ENCODE measurements at regions of chr12 and their contacts with region 1.

Region 1: DNA sequence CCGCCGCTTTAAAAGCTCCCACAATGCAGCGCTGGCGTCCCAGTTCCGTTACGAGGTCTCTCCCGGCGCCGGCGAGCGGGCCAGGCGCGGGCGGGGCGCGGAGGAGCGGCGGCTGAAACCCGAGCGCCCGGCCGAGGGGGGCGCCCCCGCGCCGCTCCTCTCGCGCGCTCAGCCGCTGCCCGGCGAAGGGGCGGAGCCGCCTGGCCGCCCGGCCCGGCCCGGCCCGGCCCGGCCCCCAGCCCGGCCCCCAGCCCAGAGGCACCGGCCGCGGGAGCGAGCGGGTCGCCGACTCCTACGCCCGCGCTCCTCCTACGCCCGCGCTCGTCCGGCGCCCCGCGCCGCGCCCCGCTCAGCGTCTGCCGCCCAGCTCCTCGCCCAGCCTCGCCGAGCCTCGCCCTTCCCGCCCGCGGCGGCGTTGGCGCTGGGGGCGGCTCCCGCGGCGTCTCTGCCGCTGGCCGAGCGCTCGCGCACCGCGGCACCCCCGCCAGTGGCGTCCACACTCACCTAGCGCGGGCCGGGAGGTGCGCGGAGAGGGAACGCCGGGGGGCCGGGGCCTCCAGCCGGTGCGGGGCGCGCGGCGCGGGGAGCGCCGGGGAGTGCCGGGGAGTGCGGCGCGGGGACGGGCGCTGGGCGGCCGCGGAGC is at the start of gene RASSF8:
- DNase-seq: peak; percentile 90
- ATAC-seq: peak; percentile 79
- H3K4me3 ChIP-seq: peak within 1 kb of the TSS; percentile 89
- H3K27ac ChIP-seq: peak within 1 kb of the TSS; percentile 96
- H3K4me1 ChIP-seq: peaks cover 26% of the 10 kb centered on the region
- H3K27me3 ChIP-seq: no peaks in the 10 kb centered on the region
- CTCF ChIP-seq: no peak
- total RNA-seq, gene RASSF8: 51.2 and 87.8 TPM in 2 replicates

Region 2: GRCh38 chr12:25436203-25437030 is 522.1 kb before region 1 on chr12:
- CTCF ChIA-PET with region 1: interaction called, 4 read pairs
- POLR2A ChIA-PET with region 1: interaction called, 15 read pairs
- intact Hi-C with region 1: loop called (anchors 2 kb)
- DNase-seq: peak; percentile 84
- ATAC-seq: peak; percentile 69
- H3K4me3 ChIP-seq: peak overlapping the region; percentile 82
- H3K27ac ChIP-seq: no peak overlapping the region
- H3K4me1 ChIP-seq: peaks cover 20% of the 10 kb centered on the region
- H3K27me3 ChIP-seq: no peaks in the 10 kb centered on the region
- CTCF ChIP-seq: peak; percentile 93

Region 3: DNA sequence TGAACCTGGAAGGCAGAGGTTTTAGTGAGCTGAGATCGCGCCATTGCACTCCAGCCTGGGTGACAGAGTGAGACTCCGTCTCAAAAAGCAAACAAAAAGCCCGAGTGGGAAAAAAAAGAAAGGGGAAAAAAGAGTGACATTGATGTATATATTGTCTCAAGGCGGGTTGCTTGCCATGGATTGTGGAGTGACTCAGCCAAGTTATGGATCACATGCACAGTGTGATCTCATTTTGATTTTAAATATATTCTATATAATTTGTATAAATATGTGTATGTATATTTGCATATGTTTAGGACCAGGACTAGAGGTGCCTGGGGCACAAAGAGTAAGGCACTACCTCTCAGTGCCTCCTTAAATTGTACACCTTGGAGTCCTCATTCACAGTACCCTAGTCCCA is 116.3 kb before region 1 on chr12:
- CTCF ChIA-PET with region 1: no interaction called
- POLR2A ChIA-PET with region 1: no interaction called
- intact Hi-C with region 1: no loop called
- DNase-seq: peak; percentile 54
- ATAC-seq: peak; percentile 9; the same call in 1 of the 2 replicates
- H3K4me3 ChIP-seq: no peak overlapping the region
- H3K27ac ChIP-seq: no peak overlapping the region
- H3K4me1 ChIP-seq: peaks cover 22% of the 10 kb centered on the region
- H3K27me3 ChIP-seq: no peaks in the 10 kb centered on the region
- CTCF ChIP-seq: no peak

Region 4: DNA sequence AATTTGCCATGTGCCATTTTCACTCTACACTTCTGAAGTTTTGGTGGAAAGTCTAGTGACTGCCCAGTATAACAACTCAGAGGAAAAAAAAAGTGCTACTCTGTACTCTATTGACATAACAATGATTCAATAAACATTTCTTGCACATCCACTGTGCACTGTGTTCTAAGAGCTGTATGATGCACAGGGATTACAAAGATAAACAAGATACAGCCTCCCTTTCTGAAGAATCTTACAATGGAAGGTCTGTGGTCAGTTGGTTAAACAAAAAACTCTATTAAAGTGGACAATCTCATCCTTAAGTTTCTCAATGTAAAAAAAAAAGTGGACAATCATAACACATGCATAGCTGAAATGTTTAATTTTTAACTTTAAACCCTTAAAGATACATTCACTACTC is 105.8 kb before region 1 on chr12:
- CTCF ChIA-PET with region 1: interaction called, 3 read pairs
- POLR2A ChIA-PET with region 1: interaction called, 3 read pairs
- intact Hi-C with region 1: loop called (anchors 5 kb)
- DNase-seq: peak; percentile 95
- ATAC-seq: peak; percentile 100
- H3K4me3 ChIP-seq: no peak overlapping the region
- H3K27ac ChIP-seq: peak overlapping the region; percentile 66
- H3K4me1 ChIP-seq: peaks cover 26% of the 10 kb centered on the region
- H3K27me3 ChIP-seq: no peaks in the 10 kb centered on the region
- CTCF ChIP-seq: no peak

Region 5: DNA sequence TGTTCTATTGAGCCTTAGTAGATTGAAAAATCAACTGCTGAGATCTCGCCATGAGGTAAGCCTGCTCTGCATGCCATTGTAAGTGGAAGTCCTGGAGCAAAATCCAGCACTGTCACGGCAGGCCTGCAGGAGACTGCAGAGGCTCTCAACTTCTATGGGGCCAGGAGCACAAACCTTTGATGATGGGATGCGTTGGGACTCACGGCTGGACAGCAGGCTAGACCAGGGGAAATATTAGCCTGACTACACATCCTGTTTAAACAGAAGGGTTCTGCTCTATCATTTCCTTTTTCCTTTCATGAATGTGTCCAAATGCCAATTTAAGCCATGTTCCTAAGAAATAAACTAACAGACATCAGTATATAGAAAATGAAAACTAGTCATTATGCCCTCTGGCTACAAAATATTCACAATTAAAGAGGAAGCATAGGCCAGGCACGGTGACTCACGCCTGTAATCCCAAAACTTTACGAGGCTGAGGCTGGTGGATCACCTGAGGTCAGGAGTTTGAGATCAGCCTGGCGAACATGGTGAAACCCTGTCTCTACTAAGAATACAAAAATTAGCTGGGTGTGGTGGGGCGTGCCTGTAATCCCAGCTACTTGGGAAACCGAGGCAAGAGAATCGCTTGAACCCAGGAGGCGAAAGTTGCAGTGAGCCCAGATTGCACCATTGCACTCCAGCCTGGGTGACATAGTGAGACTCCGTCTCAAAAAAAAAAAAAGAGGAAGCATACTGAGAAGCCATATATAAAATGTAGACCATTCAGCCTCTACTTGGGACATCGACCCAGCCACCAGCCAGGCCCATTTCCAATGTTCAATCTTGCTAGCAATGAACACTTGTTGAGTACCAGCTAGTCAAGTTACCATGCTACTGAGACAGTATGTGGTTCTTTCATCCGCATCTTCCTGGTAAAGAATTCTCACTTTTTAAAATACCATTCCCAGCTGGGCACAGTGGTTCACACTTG is 33.8 kb before region 1 on chr12:
- CTCF ChIA-PET with region 1: no interaction called
- POLR2A ChIA-PET with region 1: interaction called, 3 read pairs
- intact Hi-C with region 1: loop called (anchors 1 kb)
- DNase-seq: peak; percentile 100
- ATAC-seq: peak; percentile 83
- H3K4me3 ChIP-seq: peak overlapping the region; percentile 18; the same call in 1 of the 2 replicates
- H3K27ac ChIP-seq: peak overlapping the region; percentile 92
- H3K4me1 ChIP-seq: peaks cover 72% of the 10 kb centered on the region
- H3K27me3 ChIP-seq: no peaks in the 10 kb centered on the region
- CTCF ChIP-seq: 0 out of 2 replicates have a peak, but pooled peaks have one; percentile 27

Region 6: GRCh38 chr12:25985296-25986175 is 27.0 kb after region 1 on chr12:
- CTCF ChIA-PET with region 1: no interaction called
- POLR2A ChIA-PET with region 1: no interaction called
- intact Hi-C with region 1: no loop called
- DNase-seq: no peak
- ATAC-seq: no peak
- H3K4me3 ChIP-seq: no peak overlapping the region
- H3K27ac ChIP-seq: no peak overlapping the region
- H3K4me1 ChIP-seq: no peaks in the 10 kb centered on the region
- H3K27me3 ChIP-seq: no peaks in the 10 kb centered on the region
- CTCF ChIP-seq: no peak

Region 7: DNA sequence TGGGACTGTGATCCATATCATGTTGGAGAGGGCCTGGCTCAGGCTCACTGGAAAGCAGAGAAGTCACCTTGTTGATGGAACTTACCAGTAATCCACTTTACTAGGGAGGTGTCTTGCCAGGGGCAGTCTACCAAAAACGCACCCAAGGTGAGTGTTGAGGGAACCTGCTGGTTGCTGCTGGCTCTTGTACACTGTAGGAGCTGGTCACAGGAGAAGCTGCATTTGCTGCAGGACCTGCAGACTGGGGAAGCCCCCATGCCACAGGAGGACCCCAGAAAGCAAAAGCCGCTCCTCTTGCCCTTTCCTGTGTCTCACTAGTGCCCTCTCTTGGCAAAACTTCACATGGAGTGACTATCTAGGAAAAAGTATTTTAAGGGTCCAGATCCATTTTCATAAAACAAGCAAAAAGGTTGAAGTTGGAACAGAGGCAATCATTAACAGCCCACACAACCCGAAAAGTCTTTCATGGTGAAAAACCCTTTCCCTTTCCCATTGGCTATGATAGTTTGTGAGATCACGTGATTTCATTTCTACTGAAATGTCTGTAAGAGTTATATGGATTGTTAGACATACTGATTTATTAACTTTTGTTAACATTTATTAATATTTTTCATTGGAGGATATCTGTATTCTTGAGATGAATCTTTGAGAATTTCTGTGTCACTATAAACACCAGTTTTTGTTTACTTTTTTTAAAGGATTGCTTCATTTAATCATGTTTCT is 59.1 kb after region 1 on chr12:
- CTCF ChIA-PET with region 1: interaction called, 3 read pairs
- POLR2A ChIA-PET with region 1: no interaction called
- intact Hi-C with region 1: loop called (anchors 1 kb)
- DNase-seq: peak; percentile 86
- ATAC-seq: peak; percentile 81
- H3K4me3 ChIP-seq: peak overlapping the region; percentile 5; the same call in 1 of the 2 replicates
- H3K27ac ChIP-seq: no peak overlapping the region
- H3K4me1 ChIP-seq: peaks cover 9% of the 10 kb centered on the region; the same call in 1 of the 2 replicates
- H3K27me3 ChIP-seq: no peaks in the 10 kb centered on the region
- CTCF ChIP-seq: peak; percentile 98

Region 8: DNA sequence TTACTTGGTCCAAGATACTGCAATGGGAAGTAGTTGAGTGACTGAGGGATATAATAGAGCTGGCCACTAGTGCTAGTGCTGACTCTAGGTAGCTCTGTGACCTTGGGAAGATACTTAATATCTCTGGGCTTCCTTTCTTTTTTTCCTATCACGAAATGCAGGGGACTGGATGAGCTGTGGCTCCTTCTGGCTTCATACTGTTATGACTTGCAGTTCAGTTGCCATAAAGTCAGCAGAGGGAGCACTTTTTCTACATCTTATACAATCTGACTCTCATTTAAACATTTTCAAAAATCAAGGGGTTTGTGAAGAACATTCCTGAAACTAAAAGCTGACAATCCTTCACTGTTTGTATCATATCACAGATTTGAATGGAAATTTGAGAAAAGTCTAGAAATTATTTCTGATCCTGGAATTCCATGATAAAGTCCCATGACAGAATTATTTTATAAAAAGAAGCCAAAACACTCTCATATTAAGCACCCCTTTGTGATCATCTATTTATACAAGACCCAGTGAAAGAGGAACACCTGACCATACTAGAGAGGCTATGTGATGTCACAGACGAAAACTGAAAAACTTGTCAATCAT is 160.9 kb after region 1 on chr12:
- CTCF ChIA-PET with region 1: no interaction called
- POLR2A ChIA-PET with region 1: no interaction called
- intact Hi-C with region 1: loop called (anchors 5 kb)
- DNase-seq: peak; percentile 88
- ATAC-seq: peak; percentile 23
- H3K4me3 ChIP-seq: peak overlapping the region; percentile 77
- H3K27ac ChIP-seq: peak overlapping the region; percentile 74
- H3K4me1 ChIP-seq: peaks cover 54% of the 10 kb centered on the region
- H3K27me3 ChIP-seq: no peaks in the 10 kb centered on the region
- CTCF ChIP-seq: peak; percentile 94

Region 9: GRCh38 chr12:26143291-26143690 is 184.7 kb after region 1 on chr12:
- CTCF ChIA-PET with region 1: no interaction called
- POLR2A ChIA-PET with region 1: no interaction called
- intact Hi-C with region 1: no loop called
- DNase-seq: no peak
- ATAC-seq: no peak
- H3K4me3 ChIP-seq: no peak overlapping the region
- H3K27ac ChIP-seq: no peak overlapping the region
- H3K4me1 ChIP-seq: no peaks in the 10 kb centered on the region
- H3K27me3 ChIP-seq: no peaks in the 10 kb centered on the region
- CTCF ChIP-seq: no peak

Region 10: GRCh38 chr12:26198742-26199141 is 240.2 kb after region 1 on chr12:
- CTCF ChIA-PET with region 1: no interaction called
- POLR2A ChIA-PET with region 1: no interaction called
- intact Hi-C with region 1: no loop called
- DNase-seq: peak; percentile 78
- ATAC-seq: peak; percentile 37
- H3K4me3 ChIP-seq: no peak overlapping the region
- H3K27ac ChIP-seq: no peak overlapping the region
- H3K4me1 ChIP-seq: peaks cover 36% of the 10 kb centered on the region
- H3K27me3 ChIP-seq: no peaks in the 10 kb centered on the region
- CTCF ChIP-seq: no peak